ENCODE measurements at regions of chr2 and their contacts with region 1.

Region 1: GRCh38 chr2:180125245-180125962 is 118.3 kb upstream of the CWC22 start:
- DNase-seq: peak in 1 of 2 donors; percentile 29
- ATAC-seq: peak; percentile 47 to 61
- H3K4me3 ChIP-seq: no peak overlapping the region
- H3K27ac ChIP-seq: no peak overlapping the region
- H3K4me1 ChIP-seq: no peaks in the 10 kb centered on the region
- H3K27me3 ChIP-seq: no peaks in the 10 kb centered on the region
- CTCF ChIP-seq: peak in 3 of 5 experiments; percentile 30 to 40 (median 38)
- POLR2A ChIP-seq: no peak

Region 2: DNA sequence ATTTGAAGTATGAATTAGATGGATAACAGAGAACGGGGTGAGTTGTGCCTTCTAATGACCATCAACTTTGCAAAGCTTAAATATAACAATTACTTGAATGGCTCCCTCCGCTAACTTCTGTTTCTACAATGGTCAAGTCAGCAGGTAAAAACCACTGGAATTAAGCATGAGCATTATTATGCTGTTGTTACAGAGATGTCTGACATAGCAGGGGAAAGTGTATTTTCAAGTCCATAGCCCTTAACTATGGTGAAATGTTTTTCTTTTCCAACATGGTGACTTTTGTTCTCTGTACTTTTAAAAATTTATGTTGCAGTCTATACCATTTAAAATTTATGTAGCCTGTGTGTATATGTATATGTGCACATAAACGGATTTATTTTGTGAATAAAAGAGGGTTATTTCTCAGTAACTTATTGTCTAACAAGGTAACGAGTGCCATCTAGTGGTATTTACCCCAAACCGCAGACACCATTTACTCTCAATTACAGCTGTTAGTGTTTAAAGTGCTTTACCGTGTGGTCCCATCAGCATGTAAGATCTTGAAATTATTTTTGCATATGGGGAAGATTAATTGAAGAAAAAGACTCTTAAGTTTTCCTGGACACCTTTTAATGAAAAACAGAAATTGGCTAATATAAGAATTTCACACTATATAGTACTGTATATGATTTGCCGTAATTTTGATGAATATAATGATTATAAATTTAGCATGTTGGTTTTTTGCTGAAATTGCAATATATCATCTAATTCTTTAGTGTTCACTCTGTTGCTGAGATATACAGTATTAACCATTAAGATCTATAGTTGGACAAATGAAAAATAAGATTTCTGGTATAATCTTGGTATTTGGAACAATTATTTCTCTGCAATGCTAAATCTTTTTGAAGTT is 933.2 kb after region 1 on chr2:
- in situ Hi-C with region 1: loop called (anchors 10 to 25 kb)
- intact Hi-C with region 1: loop called (anchors 5 kb)
- DNase-seq: peak in 1 of 2 donors; percentile 11
- ATAC-seq: no peak
- H3K4me3 ChIP-seq: no peak overlapping the region
- H3K27ac ChIP-seq: no peak overlapping the region
- H3K4me1 ChIP-seq: peaks cover 0 to 7% of the 10 kb centered on the region in 2 donors
- H3K27me3 ChIP-seq: no peaks in the 10 kb centered on the region
- CTCF ChIP-seq: peak; percentile 37 to 76 (median 69)
- POLR2A ChIP-seq: no peak

Region 3: DNA sequence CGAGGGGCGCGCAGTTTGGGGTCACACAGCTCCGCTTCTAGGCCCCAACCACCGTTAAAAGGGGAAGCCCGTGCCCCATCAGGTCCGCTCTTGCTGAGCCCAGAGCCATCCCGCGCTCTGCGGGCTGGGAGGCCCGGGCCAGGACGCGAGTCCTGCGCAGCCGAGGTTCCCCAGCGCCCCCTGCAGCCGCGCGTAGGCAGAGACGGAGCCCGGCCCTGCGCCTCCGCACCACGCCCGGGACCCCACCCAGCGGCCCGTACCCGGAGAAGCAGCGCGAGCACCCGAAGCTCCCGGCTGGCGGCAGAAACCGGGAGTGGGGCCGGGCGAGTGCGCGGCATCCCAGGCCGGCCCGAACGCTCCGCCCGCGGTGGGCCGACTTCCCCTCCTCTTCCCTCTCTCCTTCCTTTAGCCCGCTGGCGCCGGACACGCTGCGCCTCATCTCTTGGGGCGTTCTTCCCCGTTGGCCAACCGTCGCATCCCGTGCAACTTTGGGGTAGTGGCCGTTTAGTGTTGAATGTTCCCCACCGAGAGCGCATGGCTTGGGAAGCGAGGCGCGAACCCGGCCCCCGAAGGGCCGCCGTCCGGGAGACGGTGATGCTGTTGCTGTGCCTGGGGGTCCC is 1331.8 kb after region 1 on chr2 and contains the start of gene ITGA4:
- in situ Hi-C with region 1: loop called in 3 of 4 experiments (anchors 25 kb)
- intact Hi-C with region 1: no loop called
- DNase-seq: peak; percentile 2 to 17
- ATAC-seq: no peak
- H3K4me3 ChIP-seq: peak within 1 kb of the TSS; percentile 30 to 52 (median 46)
- H3K27ac ChIP-seq: no peak within 1 kb of the TSS
- H3K4me1 ChIP-seq: no peaks in the 10 kb centered on the region
- H3K27me3 ChIP-seq: peaks cover 15 to 25% (median 19%) of the 10 kb centered on the region in 3 donors
- CTCF ChIP-seq: peak in 1 of 5 experiments; percentile 22
- POLR2A ChIP-seq: no peak
- total RNA-seq, gene ITGA4: 0.47 to 0.61 (median 0.55) TPM in 3 of 4 donors, not detected in the other

Region 4: GRCh38 chr2:181466661-181467576 is 1341.5 kb after region 1 on chr2:
- in situ Hi-C with region 1: loop called in 3 of 4 experiments (anchors 25 kb)
- intact Hi-C with region 1: loop called (anchors 5 kb)
- DNase-seq: peak; percentile 2 to 17
- ATAC-seq: no peak
- H3K4me3 ChIP-seq: no peak overlapping the region
- H3K27ac ChIP-seq: no peak overlapping the region
- H3K4me1 ChIP-seq: no peaks in the 10 kb centered on the region
- H3K27me3 ChIP-seq: no peaks in the 10 kb centered on the region
- CTCF ChIP-seq: peak; percentile 12 to 68 (median 41)
- POLR2A ChIP-seq: no peak

Region 5: DNA sequence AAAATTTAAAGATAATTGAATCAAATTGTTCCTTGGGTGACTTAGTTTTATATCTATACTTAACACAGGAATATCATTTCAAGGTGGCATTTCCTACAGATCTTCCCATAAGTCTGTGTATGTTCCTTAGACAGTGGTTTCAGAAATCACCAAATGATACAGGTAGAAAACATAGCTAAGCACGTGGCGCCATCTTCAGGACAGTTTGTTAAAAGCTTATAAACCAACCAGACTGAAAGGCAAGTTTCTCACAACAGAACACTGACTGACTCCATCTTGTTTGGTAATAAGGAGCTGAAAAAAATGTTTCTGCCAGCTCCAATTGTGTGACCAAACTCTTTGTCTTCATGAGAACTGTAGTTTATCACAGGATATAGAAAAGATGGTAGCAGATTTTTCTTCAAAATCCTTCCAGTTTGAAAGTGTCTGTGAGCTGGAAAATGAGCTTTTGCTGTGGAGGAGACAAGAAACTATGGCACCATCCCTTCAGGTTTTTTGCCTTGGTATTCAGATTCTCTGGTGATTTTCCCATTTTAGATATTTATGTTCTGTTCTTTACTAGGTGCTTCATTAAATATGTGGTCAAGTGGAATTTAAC is 1589.7 kb after region 1 on chr2:
- in situ Hi-C with region 1: loop called (anchors 10 to 25 kb)
- intact Hi-C with region 1: no loop called
- DNase-seq: peak; percentile 3 to 15
- ATAC-seq: peak in 1 of 2 donors; percentile 65
- H3K4me3 ChIP-seq: no peak overlapping the region
- H3K27ac ChIP-seq: no peak overlapping the region
- H3K4me1 ChIP-seq: no peaks in the 10 kb centered on the region
- H3K27me3 ChIP-seq: no peaks in the 10 kb centered on the region
- CTCF ChIP-seq: peak in 3 of 5 experiments; percentile 25 to 54 (median 48)
- POLR2A ChIP-seq: no peak

Region 6: GRCh38 chr2:181723731-181724130 is 1598.3 kb after region 1 on chr2:
- in situ Hi-C with region 1: loop called (anchors 10 to 25 kb)
- intact Hi-C with region 1: no loop called
- DNase-seq: no peak
- ATAC-seq: no peak
- H3K4me3 ChIP-seq: no peak overlapping the region
- H3K27ac ChIP-seq: no peak overlapping the region
- H3K4me1 ChIP-seq: no peaks in the 10 kb centered on the region
- H3K27me3 ChIP-seq: no peaks in the 10 kb centered on the region
- CTCF ChIP-seq: no peak
- POLR2A ChIP-seq: no peak

Measured in gastrocnemius medialis (tissue), 4 donors.